ENCODE measurements at regions of chr5 and their contacts with region 1.

Region 1: GRCh38 chr5:134648425-134649162 is at the start of gene SEC24A:
- DNase-seq: peak; percentile 74 to 98 (median 82)
- ATAC-seq: peak; percentile 78
- H3K4me3 ChIP-seq: peak within 1 kb of the TSS; percentile 80
- H3K4me3 Mint-ChIP-seq: peak within 1 kb of the TSS; percentile 99
- H3K27ac ChIP-seq: peak within 1 kb of the TSS; percentile 93 to 98
- H3K27ac Mint-ChIP-seq: peak within 1 kb of the TSS; percentile 95
- H3K4me1 ChIP-seq: peaks cover 27% of the 10 kb centered on the region
- H3K4me1 Mint-ChIP-seq: peaks cover 31% of the 10 kb centered on the region
- H3K27me3 ChIP-seq: no peaks in the 10 kb centered on the region
- H3K27me3 Mint-ChIP-seq: no peaks in the 10 kb centered on the region
- CTCF ChIP-seq: no peak
- total RNA-seq, gene SEC24A: 11.7 to 12.3 TPM

Region 2: GRCh38 chr5:134626369-134627014 is 22.1 kb before region 1 on chr5:
- CTCF ChIA-PET with region 1: no interaction called
- POLR2A ChIA-PET with region 1: interaction called, 13 read pairs
- intact Hi-C with region 1: no loop called
- DNase-seq: no peak
- ATAC-seq: no peak
- H3K4me3 ChIP-seq: no peak overlapping the region
- H3K4me3 Mint-ChIP-seq: no peak overlapping the region
- H3K27ac ChIP-seq: no peak overlapping the region
- H3K27ac Mint-ChIP-seq: no peak overlapping the region
- H3K4me1 ChIP-seq: peaks cover 5% of the 10 kb centered on the region
- H3K4me1 Mint-ChIP-seq: peaks cover 30% of the 10 kb centered on the region
- H3K27me3 ChIP-seq: no peaks in the 10 kb centered on the region
- H3K27me3 Mint-ChIP-seq: no peaks in the 10 kb centered on the region
- CTCF ChIP-seq: no peak

Region 3: DNA sequence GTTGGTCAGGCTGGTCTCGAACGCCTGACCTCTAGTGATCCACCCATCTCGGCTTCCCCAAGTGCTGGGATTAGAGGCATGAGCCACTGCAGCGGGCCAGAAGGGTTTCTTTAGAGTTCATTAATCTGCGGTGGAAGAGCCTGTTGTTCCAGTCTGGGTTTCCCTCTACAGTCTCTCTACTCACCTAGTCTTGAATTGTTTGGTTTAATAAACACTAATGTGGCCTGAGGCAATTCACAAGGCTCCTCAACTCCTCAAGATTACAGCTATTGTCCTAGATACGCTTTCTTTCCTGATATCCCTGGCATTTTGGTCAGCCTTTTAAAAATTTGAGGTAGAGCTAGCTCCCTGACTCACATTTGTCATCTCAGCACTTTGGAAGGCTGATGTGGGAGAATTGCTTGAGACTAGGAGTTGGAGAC is 11.4 kb before region 1 on chr5:
- CTCF ChIA-PET with region 1: interaction called, 3 read pairs
- POLR2A ChIA-PET with region 1: interaction called, 13 read pairs
- intact Hi-C with region 1: loop called (anchors 1 kb)
- DNase-seq: no peak
- ATAC-seq: no peak
- H3K4me3 ChIP-seq: no peak overlapping the region
- H3K4me3 Mint-ChIP-seq: no peak overlapping the region
- H3K27ac ChIP-seq: no peak overlapping the region
- H3K27ac Mint-ChIP-seq: no peak overlapping the region
- H3K4me1 ChIP-seq: peaks cover 8% of the 10 kb centered on the region
- H3K4me1 Mint-ChIP-seq: peaks cover 12% of the 10 kb centered on the region
- H3K27me3 ChIP-seq: no peaks in the 10 kb centered on the region
- H3K27me3 Mint-ChIP-seq: no peaks in the 10 kb centered on the region
- CTCF ChIP-seq: no peak

Region 4: GRCh38 chr5:134845852-134846640 is 197.5 kb after region 1 on chr5 and contains the start of gene C5orf24:
- CTCF ChIA-PET with region 1: no interaction called
- POLR2A ChIA-PET with region 1: interaction called, 6 read pairs
- intact Hi-C with region 1: loop called in 1 of 2 experiments (anchors 2 kb)
- DNase-seq: peak; percentile 83 to 98 (median 90)
- ATAC-seq: peak; percentile 90
- H3K4me3 ChIP-seq: peak within 1 kb of the TSS; percentile 76
- H3K4me3 Mint-ChIP-seq: peak within 1 kb of the TSS; percentile 86
- H3K27ac ChIP-seq: peak within 1 kb of the TSS; percentile 87
- H3K27ac Mint-ChIP-seq: peak within 1 kb of the TSS; percentile 95
- H3K4me1 ChIP-seq: peaks cover 35% of the 10 kb centered on the region
- H3K4me1 Mint-ChIP-seq: peaks cover 26% of the 10 kb centered on the region
- H3K27me3 ChIP-seq: no peaks in the 10 kb centered on the region
- H3K27me3 Mint-ChIP-seq: no peaks in the 10 kb centered on the region
- CTCF ChIP-seq: no peak
- total RNA-seq, gene C5orf24: 34.6 to 36.5 TPM